Right cardiac atrium (tissue), 5 donors: ENCODE measurements at regions of chr15 and their contacts with region 1.

Region 1: GRCh38 chr15:45198337-45199135 is 10.8 kb upstream of the SHF start:
- DNase-seq: peak; percentile 94 to 97 (median 96)
- ATAC-seq: peak; percentile 88 to 90
- H3K4me3 ChIP-seq: peak overlapping the region; percentile 79
- H3K27ac ChIP-seq: peak overlapping the region; percentile 95
- H3K4me1 ChIP-seq: peaks cover 2% of the 10 kb centered on the region
- H3K27me3 ChIP-seq: no peaks in the 10 kb centered on the region

Region 2: DNA sequence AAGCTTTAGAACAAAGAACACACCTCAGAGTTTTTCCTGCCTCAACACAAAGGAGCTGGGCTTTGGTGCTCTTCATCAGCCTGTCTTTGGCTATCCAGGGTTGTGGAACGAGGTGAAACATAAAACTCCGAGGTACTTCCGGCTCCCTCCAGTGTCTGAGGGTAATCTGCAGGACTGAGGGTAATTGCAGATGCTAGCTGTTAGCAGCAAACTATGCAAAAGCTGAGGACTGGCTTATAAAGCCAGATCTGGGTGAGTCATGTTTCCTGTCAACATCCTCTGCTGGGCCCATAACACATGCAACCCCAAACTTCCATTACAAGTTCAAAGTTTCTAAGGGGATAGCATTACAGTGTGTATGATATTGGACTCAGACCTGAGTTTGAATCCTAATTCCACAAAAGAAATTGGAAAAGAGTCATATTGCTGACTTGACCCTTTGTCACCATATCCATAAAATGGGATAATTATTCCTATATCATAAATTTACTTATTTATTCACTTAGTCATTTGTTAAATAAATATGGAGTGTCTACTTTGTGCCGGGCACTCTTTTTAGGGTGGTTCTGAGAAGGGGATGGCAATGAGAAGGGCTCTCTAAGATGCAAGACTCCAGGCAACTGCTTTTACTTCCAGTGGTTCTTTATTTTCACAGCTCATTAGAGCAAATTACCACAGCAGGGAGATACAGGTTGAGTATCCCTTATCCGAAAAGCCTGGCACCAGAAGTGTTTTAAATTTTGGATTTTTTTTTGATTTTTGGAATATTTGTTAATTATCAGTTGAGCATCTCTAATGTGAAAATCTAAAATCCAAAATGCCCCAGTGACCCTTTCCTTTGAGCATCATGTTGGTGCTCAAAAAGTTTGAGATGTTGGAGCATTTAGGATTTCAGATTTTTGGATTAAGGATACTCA is 471.7 kb before region 1 on chr15:
- intact Hi-C with region 1: no loop called
- DNase-seq: peak in 1 of 3 donors; percentile 29
- ATAC-seq: peak; percentile 23 to 46
- H3K4me3 ChIP-seq: peak overlapping the region; percentile 22
- H3K27ac ChIP-seq: peak overlapping the region; percentile 93
- H3K4me1 ChIP-seq: no peaks in the 10 kb centered on the region
- H3K27me3 ChIP-seq: no peaks in the 10 kb centered on the region

Region 3: DNA sequence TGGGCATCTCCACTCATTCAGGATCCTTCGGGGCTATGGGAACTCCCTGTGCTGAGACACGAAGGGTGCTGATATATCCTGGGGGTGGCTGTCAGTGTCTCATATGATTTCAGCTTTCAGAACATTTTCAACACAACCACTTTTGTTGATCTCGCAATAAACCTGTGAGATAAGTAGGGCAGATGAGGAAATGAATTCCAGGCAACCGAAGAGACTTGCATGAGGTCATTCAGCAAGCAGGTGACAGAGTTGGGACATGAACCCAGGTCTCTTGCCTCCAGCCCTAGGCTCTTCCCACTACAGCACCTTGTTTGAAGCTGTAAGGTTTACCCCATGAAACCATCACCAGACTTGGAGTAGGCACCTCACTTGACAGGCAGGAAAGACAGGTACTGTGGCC is 52.1 kb before region 1 on chr15:
- intact Hi-C with region 1: no loop called
- DNase-seq: peak in 1 of 3 donors; percentile 15
- ATAC-seq: no peak
- H3K4me3 ChIP-seq: no peak overlapping the region
- H3K27ac ChIP-seq: no peak overlapping the region
- H3K4me1 ChIP-seq: no peaks in the 10 kb centered on the region
- H3K27me3 ChIP-seq: no peaks in the 10 kb centered on the region

Region 4: GRCh38 chr15:45166834-45167630 is 31.5 kb before region 1 on chr15:
- intact Hi-C with region 1: loop called in 1 of 4 experiments (anchors 5 kb)
- DNase-seq: peak; percentile 91 to 96 (median 96)
- ATAC-seq: peak; percentile 85 to 87
- H3K4me3 ChIP-seq: peak overlapping the region; percentile 76
- H3K27ac ChIP-seq: peak overlapping the region; percentile 98
- H3K4me1 ChIP-seq: peaks cover 5% of the 10 kb centered on the region
- H3K27me3 ChIP-seq: no peaks in the 10 kb centered on the region

Region 5: DNA sequence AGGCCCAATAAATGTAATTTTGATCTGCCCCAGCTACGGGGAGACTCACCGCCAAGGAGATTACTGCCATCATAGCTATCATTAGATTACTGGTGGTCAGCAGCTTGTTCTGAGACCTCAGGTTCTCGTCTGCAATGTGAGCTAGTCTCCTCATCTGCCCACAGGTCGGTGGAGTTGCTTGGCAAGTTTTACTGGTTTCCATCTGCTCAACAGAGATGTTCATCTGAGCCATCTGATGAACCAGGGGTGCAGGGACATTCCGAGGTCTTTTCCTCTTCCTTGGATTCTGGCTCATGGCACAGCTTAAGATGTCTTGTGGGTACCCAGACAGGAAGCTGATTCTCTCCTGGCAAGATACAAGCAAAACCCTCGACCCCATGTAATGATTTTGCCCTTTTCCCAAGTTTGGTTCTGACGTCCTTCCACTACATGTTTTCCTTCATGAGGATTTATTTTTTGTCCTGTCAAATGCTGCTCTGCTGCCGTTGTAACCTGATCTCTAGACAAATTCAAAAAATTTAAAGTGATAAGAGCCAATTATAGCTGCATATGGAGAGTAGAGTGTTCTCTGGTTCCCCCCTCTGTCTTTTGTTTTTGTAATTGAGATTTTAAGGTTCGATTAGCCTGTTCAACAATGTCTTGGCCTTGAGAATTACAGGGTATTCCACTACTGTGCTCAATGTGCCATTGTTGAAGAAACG is 38.4 kb after region 1 on chr15:
- intact Hi-C with region 1: no loop called
- DNase-seq: no peak
- ATAC-seq: no peak
- H3K4me3 ChIP-seq: no peak overlapping the region
- H3K27ac ChIP-seq: peak overlapping the region; percentile 26
- H3K4me1 ChIP-seq: peaks cover 3% of the 10 kb centered on the region
- H3K27me3 ChIP-seq: no peaks in the 10 kb centered on the region

Region 6: DNA sequence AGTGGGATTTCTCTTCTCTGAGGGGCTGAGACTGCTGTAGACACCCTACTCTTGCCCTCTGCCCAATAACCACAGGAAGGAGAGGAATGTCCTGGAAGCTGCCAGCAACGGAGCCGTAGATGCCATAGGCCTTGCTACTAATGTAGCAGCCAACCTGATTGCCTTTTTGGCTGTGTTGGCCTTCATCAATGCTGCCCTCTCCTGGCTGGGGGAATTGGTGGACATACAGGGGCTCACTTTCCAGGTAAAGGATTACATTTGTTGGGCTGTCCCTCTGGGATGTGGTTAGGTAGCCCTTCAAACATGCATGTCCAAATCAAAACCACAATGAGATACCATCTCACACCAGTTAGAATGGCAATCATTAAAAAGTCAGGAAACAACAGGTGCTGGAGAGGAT is 69.6 kb after region 1 on chr15:
- intact Hi-C with region 1: loop called in 2 of 4 experiments (anchors 5 to 10 kb)
- DNase-seq: no peak
- ATAC-seq: no peak
- H3K4me3 ChIP-seq: no peak overlapping the region
- H3K27ac ChIP-seq: no peak overlapping the region
- H3K4me1 ChIP-seq: no peaks in the 10 kb centered on the region
- H3K27me3 ChIP-seq: no peaks in the 10 kb centered on the region

Region 7: GRCh38 chr15:45274636-45275380 is 76.3 kb after region 1 on chr15:
- intact Hi-C with region 1: loop called in 1 of 4 experiments (anchors 5 kb)
- DNase-seq: no peak
- ATAC-seq: no peak
- H3K4me3 ChIP-seq: no peak overlapping the region
- H3K27ac ChIP-seq: no peak overlapping the region
- H3K4me1 ChIP-seq: peaks cover 3% of the 10 kb centered on the region
- H3K27me3 ChIP-seq: no peaks in the 10 kb centered on the region

Region 8: DNA sequence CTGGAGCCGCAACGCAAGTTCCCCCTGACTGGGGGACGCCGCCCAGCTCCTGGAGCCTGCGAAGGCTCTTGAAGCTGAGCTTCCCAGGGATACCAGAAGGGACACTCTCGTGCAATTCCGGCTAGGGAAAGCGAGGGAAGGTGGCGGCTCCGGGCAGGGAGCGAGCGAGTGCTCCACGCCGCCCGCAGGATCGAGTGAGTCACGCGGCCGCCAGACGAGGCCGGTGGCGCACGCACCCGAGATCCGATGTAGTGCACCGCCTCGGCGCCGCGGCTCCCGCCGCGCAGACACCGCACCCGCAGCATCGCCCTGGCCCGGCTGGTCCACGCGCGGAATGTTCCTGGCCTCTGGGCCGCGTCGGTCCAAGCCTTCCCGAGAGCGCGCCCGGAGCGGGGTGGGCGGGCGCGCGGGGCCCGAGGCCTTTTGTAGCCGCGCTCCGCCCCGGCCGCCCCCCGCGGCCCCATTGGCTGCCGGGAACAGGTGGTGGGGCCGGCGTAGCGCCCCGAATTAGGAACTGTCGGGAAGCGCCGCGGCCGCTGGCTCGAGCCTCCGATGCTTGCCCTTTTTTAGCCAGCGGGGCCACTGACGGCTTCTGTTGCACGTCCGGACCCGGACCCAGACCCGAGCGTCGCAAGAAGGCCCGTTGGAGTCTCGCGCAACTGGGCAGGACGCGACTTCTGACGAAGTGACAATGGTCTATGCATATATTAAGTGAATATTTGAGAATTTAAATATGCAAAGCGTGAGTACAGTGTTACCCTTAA is 179.8 kb after region 1 on chr15 and contains the start of gene GATM:
- intact Hi-C with region 1: loop called in 1 of 4 experiments (anchors 10 kb)
- DNase-seq: peak; percentile 84 to 94 (median 94)
- ATAC-seq: peak; percentile 97 to 98
- H3K4me3 ChIP-seq: peak within 1 kb of the TSS; percentile 58
- H3K27ac ChIP-seq: peak within 1 kb of the TSS; percentile 69
- H3K4me1 ChIP-seq: peaks cover 2% of the 10 kb centered on the region
- H3K27me3 ChIP-seq: no peaks in the 10 kb centered on the region
- total RNA-seq, gene GATM: 22.2 to 33.8 (median 31.2) TPM

Region 9: GRCh38 chr15:45402162-45402954 is 203.8 kb after region 1 on chr15:
- intact Hi-C with region 1: loop called in 2 of 4 experiments (anchors 2 to 5 kb)
- DNase-seq: peak; percentile 97 to 98 (median 97)
- ATAC-seq: peak; percentile 98
- H3K4me3 ChIP-seq: peak overlapping the region; percentile 76
- H3K27ac ChIP-seq: peak overlapping the region; percentile 95
- H3K4me1 ChIP-seq: no peaks in the 10 kb centered on the region
- H3K27me3 ChIP-seq: no peaks in the 10 kb centered on the region

Region 10: GRCh38 chr15:45690581-45691260 is 492.2 kb after region 1 on chr15:
- intact Hi-C with region 1: no loop called
- DNase-seq: no peak
- ATAC-seq: no peak
- H3K4me3 ChIP-seq: no peak overlapping the region
- H3K27ac ChIP-seq: no peak overlapping the region
- H3K4me1 ChIP-seq: no peaks in the 10 kb centered on the region
- H3K27me3 ChIP-seq: no peaks in the 10 kb centered on the region